ENCODE measurements at regions of chr1 and their contacts with region 1.

Region 1: DNA sequence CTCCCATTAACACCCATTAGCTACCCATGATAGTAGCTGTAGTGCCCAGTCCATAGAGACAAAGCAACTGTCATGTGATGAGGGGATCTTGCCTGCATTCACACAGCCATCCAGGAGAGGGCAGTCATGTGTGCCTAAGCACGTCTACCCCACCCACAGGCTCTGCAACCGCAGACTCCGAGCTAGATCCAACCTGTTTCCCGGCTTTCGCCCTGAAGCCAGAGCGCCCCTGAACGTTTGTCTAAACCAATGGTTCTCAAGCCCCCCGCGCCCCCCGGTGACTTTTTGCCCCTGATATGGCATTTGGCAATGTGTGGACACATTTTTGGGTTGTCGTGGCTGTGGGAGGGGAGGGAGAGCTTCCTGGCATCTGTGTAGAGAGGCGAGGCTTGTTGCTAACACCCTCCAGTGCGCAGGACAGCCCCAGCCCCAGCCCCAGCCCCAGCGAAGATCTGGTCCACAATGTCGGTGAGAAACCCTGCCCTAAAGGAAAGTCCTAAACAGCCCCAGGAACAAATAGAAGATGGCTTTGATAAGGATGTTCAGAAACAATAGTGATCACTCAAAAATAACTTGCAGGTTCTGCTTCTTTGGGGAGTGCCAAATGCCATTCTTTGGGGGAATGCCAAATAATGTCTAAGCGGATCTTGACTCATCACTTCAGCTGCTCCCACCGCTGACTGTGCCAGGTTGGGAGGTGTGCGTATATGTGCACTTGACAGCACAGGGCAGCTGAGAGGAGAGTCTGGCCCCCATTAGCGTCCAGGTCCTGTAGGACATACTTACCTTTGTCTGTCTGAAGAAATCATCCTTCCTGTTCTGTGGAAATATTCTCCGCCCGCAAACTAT is 34.5 kb downstream of the SLC44A3 start:
- DNase-seq: peak; percentile 92 to 93
- ATAC-seq: peak; percentile 97
- H3K4me3 ChIP-seq: peak overlapping the region in 1 of 2 donors; percentile 36
- H3K27ac ChIP-seq: peak overlapping the region; percentile 34 to 68
- H3K4me1 ChIP-seq: peaks cover 0 to 3% of the 10 kb centered on the region in 2 donors
- H3K27me3 ChIP-seq: no peaks in the 10 kb centered on the region

Region 2: DNA sequence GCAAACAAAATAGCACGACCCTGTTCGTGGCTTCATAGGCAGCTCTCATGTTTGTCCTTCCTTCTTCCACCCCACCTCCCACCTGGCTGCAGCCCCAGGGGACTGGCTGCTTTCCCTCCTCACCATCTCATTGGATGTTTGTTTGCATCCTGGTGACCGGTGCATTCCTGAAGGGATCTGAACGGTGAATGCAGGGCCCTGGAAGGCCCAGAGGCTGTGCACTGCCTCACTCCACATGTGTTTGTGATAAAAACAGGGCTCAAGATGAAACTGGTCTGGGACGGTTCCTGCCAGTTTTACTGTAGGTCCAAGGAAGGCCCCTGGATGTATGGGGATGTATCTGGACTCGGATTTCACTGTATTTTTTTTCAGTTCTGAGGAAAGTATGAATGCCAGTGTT is 29.4 kb after region 1 on chr1:
- intact Hi-C with region 1: loop called in 1 of 2 experiments (anchors 2 kb)
- DNase-seq: no peak
- ATAC-seq: peak; percentile 45
- H3K4me3 ChIP-seq: no peak overlapping the region
- H3K27ac ChIP-seq: peak overlapping the region; percentile 58 to 69
- H3K4me1 ChIP-seq: peaks cover 0 to 3% of the 10 kb centered on the region in 2 donors
- H3K27me3 ChIP-seq: no peaks in the 10 kb centered on the region

Region 3: GRCh38 chr1:94898491-94899385 is 44.1 kb after region 1 on chr1:
- intact Hi-C with region 1: loop called in 1 of 2 experiments (anchors 5 kb)
- DNase-seq: no peak
- ATAC-seq: no peak
- H3K4me3 ChIP-seq: no peak overlapping the region
- H3K27ac ChIP-seq: peak overlapping the region; percentile 82 to 84
- H3K4me1 ChIP-seq: peaks cover 2 to 8% of the 10 kb centered on the region in 2 donors
- H3K27me3 ChIP-seq: no peaks in the 10 kb centered on the region